Sigmoid colon (tissue), 7 donors: ENCODE measurements at regions of chr2 and their contacts with region 1.

Region 1: GRCh38 chr2:36355151-36355889 is at the start of gene CRIM1:
- DNase-seq: peak; percentile 96
- H3K4me3 ChIP-seq: peak within 1 kb of the TSS; percentile 81 to 91 (median 87)
- H3K27ac ChIP-seq: peak within 1 kb of the TSS; percentile 87 to 96 (median 92)
- H3K4me1 ChIP-seq: peaks cover 0 to 61% (median 26%) of the 10 kb centered on the region in 4 donors
- H3K27me3 ChIP-seq: no peaks in the 10 kb centered on the region
- CTCF ChIP-seq: no peak
- EP300 ChIP-seq: no peak
- POLR2A ChIP-seq: peak in 1 of 2 donors; percentile 35
- total RNA-seq, gene CRIM1: 55.6 to 148 (median 64.2) TPM

Region 2: DNA sequence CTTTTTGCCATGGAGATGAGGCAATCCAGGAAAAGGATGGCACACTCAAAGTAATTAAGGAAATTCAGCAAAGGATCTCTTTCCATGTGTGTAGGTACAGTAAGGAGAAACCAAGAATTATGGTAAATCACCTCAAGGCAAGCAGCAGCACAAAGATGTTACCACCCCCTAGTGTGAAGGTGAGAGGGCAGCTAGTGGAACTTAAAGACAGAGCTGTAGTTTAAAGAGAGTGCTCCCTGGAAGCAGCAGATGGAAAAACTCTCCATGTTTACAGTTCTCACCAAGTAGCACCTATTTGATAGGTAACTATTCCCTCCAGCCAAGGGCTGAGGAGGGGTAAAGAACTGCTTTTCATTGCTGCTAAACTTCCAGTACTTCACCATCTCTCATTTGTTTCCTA is 860.1 kb before region 1 on chr2:
- intact Hi-C with region 1: no loop called
- DNase-seq: no peak
- H3K4me3 ChIP-seq: no peak overlapping the region
- H3K27ac ChIP-seq: no peak overlapping the region
- H3K4me1 ChIP-seq: no peaks in the 10 kb centered on the region
- H3K27me3 ChIP-seq: no peaks in the 10 kb centered on the region
- CTCF ChIP-seq: no peak
- EP300 ChIP-seq: no peak
- POLR2A ChIP-seq: no peak

Region 3: DNA sequence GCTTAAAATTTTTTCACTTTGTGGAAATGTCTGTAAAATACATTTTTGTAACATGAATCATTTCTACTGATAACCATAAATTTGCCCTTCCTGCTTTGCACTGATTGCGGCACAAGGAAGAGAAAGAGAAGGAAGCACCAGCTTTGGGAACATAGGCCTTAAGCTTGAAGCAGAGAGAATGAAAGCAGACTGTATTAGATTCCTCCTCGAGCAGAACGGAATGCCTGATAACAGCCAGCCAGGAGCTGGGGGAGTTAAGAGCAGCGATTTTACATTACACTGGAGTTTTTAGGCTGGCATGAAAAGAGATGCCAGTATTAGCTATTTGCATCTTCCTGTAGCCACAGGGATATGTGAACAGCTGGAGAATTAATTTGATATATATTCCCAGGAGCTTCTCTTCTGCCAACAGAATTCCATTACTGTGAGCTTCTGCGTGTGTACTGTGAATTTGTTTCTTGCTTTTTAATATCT is 33.8 kb after region 1 on chr2:
- intact Hi-C with region 1: loop called (anchors 2 kb)
- DNase-seq: no peak
- H3K4me3 ChIP-seq: peak overlapping the region in 1 of 4 donors; percentile 9
- H3K27ac ChIP-seq: peak overlapping the region in 3 of 4 donors; percentile 52 to 74 (median 74)
- H3K4me1 ChIP-seq: peaks cover 0 to 54% (median 41%) of the 10 kb centered on the region in 4 donors
- H3K27me3 ChIP-seq: no peaks in the 10 kb centered on the region
- CTCF ChIP-seq: no peak
- EP300 ChIP-seq: no peak
- POLR2A ChIP-seq: no peak

Region 4: DNA sequence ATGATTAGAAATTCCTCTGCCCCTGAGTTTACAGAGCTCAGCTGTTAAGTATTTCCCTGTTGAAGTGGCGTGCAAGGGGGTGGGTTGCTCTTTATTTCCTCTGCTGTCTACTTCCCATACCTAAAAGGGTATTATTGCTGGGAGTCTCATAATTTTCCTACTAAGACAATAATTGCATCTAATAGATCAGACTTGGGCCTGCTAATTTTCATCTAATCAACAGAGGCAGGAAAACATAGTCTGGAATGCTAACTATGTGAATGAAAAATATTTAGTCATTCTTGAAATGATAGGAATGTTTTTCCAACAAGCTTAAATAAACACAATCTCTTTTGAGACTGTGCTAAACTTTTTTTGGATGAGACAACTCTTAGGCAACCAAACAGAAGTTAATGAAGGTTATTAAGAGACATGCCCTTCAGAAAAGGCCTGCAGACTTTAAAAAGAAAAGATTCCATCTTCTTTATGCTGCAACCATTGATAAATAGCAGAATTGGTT is 131.3 kb after region 1 on chr2:
- intact Hi-C with region 1: loop called (anchors 2 kb)
- DNase-seq: no peak
- H3K4me3 ChIP-seq: no peak overlapping the region
- H3K27ac ChIP-seq: peak overlapping the region; percentile 72 to 87 (median 78)
- H3K4me1 ChIP-seq: peaks cover 0 to 98% (median 87%) of the 10 kb centered on the region in 4 donors
- H3K27me3 ChIP-seq: no peaks in the 10 kb centered on the region
- CTCF ChIP-seq: no peak
- EP300 ChIP-seq: no peak
- POLR2A ChIP-seq: no peak

Region 5: DNA sequence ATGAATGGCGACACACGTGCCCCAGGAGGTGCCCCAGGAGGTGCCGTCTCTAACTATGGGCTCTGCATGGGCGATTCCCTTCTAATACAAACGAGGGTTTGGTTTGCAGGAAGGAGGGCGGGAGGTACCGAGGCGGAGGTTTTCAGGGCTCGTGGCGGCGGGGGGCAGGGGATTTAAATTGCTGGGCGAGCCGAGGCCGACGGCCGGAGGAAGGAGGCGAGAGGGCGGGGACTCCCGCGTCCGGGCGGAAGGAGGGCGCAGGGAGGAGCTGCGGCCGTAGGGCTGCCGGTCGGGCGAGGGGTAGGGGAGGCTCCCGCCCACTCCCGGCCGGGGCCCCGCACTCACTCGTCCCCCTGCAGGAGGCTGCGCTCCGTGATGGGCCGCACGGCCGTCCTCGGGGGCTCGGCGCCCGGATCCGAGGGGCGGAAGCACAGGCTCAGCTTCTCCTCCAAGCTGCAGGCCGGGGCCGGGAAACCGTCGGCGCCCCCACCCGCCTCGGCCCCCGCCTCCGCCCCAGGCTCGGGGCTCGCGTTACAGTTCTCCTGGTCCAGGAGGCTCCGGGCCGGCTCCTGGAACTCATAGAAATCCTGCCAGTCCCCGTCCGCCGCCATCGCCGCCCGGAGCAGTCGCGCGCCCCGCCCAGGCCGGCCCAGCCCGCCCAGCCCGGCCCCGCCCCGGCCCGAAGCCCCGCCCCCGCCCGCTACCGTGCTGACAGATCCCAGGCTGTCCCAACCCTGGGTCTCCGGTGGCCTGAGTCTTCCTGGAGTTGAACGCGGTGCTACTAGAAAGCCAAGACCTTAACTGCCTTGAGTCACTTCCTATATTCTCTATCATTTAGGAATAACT is 242.4 kb after region 1 on chr2 and contains the start of gene FEZ2:
- intact Hi-C with region 1: loop called (anchors 2 kb)
- DNase-seq: peak; percentile 84
- H3K4me3 ChIP-seq: peak within 1 kb of the TSS; percentile 92 to 100 (median 98)
- H3K27ac ChIP-seq: peak within 1 kb of the TSS; percentile 97 to 100 (median 98)
- H3K4me1 ChIP-seq: peaks cover 0 to 36% (median 27%) of the 10 kb centered on the region in 4 donors
- H3K27me3 ChIP-seq: no peaks in the 10 kb centered on the region
- CTCF ChIP-seq: no peak
- EP300 ChIP-seq: no peak
- POLR2A ChIP-seq: no peak
- total RNA-seq, gene FEZ2: 36.2 to 53.9 (median 47.6) TPM

Region 6: DNA sequence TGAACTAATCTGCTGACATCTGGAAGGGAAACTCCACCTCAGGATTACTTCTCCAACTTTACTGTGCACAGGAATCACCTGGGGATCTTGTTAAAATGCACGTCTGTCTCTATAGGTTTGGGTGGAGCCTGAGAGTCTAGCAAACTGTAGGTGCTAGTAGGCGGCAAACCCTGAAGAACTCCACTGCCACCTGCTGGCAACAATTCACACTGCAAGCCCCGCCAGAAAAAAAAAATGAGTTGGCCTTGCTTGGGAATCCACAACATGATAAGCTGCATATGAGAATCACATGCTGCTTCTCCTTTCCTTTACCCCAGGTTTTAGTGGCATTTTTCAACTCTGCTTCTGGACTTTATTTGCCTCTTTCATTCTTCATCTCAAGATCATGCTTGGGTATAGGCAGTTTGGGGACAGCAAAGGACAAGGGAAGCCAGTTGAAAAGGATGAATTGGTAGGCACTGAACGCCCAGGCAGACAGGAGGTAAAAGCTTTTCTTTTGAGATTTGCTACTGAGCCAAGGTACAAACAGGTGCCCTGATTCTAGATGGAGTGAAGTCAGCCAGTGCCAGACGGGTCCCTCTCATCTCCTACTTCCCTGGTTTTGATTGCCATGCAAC is 430.0 kb after region 1 on chr2:
- intact Hi-C with region 1: loop called (anchors 5 kb)
- DNase-seq: no peak
- H3K4me3 ChIP-seq: no peak overlapping the region
- H3K27ac ChIP-seq: no peak overlapping the region
- H3K4me1 ChIP-seq: no peaks in the 10 kb centered on the region
- H3K27me3 ChIP-seq: peaks cover 0 to 4% (median 0%) of the 10 kb centered on the region in 3 donors
- CTCF ChIP-seq: peak; percentile 49 to 96 (median 79)
- EP300 ChIP-seq: no peak
- POLR2A ChIP-seq: no peak